ENCODE measurements at regions of chr14 and their contacts with region 1.

Region 1: GRCh38 chr14:93115069-93115820 is 480 bp downstream of the ITPK1 start:
- DNase-seq: peak; percentile 93
- H3K4me3 ChIP-seq: peak overlapping the region; percentile 54 to 88 (median 77)
- H3K27ac ChIP-seq: peak overlapping the region; percentile 98 to 100 (median 100)
- H3K4me1 ChIP-seq: peaks cover 0 to 51% (median 38%) of the 10 kb centered on the region in 4 donors
- H3K27me3 ChIP-seq: no peaks in the 10 kb centered on the region
- CTCF ChIP-seq: peak in 1 of 4 experiments; percentile 19
- EP300 ChIP-seq: no peak
- POLR2A ChIP-seq: peak; percentile 49 to 50

Region 2: DNA sequence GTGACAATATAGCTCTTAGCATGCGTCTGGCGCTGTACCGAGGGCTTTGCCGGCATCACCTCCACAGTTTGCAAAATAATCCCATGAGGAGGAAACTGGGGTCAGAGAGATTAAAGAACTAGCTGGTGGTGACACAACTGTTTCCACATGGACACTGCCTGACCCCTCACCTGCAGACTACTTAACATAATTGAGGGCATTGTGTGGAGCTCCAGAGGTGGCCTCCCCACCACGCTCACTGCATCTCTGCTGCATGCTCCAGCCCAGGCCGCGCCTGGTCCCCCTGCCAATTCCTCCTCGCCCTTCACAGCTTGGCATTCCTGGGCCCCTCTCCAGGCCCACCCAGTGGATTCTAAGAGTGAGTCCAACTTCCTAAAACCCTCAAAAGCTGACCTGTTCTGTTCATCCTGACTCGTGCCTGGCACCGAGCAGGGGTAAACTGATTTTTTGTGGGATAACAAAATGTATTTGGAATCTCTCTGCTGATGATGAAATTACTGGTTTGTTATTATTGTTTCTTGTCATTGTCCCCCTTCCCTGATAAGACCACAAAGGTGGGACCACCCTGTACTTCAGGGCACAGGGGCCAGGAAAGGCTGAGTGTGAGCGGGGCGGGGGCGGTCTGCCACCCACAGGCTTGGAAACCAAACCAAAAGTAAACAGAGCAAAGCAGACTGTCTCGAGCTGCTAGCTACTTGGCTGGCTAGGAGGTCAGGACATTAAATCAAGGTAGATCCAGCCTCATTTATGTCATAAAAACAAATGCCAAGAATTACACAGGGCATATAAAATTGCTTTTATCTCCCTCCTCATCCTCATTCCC is 151.7 kb before region 1 on chr14:
- intact Hi-C with region 1: loop called (anchors 2 kb)
- DNase-seq: no peak
- H3K4me3 ChIP-seq: no peak overlapping the region
- H3K27ac ChIP-seq: peak overlapping the region; percentile 76 to 89 (median 81)
- H3K4me1 ChIP-seq: peaks cover 0 to 50% (median 37%) of the 10 kb centered on the region in 4 donors
- H3K27me3 ChIP-seq: no peaks in the 10 kb centered on the region
- CTCF ChIP-seq: no peak
- EP300 ChIP-seq: peak in 3 of 4 donors; percentile 4 to 51 (median 37)
- POLR2A ChIP-seq: no peak

Region 3: DNA sequence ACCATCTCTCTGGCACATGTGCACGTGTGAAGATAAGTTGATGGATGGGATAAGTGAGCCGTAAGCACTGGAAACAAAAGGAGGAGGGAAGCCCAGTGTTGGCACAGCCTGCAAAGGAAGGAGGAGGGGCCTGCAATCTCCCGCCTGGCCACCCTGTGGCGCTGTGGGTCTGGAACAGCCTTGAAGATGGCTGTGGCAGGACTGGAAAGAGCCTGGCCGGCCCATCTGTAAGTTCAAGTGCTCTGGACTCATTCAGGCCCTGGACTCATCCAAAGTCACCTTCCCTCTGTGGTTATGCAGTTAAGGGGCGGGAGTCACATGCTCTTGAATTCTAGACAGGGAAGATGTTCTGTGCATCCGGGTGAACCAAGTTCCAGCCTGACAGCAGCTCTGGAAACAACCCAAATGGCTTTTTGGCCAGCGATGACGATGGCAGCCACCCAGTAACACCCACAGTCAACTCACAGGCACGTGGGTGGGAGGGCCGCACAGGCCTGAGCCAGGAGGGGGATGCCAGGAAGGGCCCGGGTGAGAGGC is 141.9 kb before region 1 on chr14:
- intact Hi-C with region 1: loop called (anchors 2 kb)
- DNase-seq: peak; percentile 94
- H3K4me3 ChIP-seq: no peak overlapping the region
- H3K27ac ChIP-seq: peak overlapping the region; percentile 77 to 90 (median 85)
- H3K4me1 ChIP-seq: peaks cover 0 to 38% (median 28%) of the 10 kb centered on the region in 4 donors
- H3K27me3 ChIP-seq: no peaks in the 10 kb centered on the region
- CTCF ChIP-seq: peak; percentile 87 to 98 (median 95)
- EP300 ChIP-seq: peak in 3 of 4 donors; percentile 10 to 62 (median 39)
- POLR2A ChIP-seq: no peak

Region 4: DNA sequence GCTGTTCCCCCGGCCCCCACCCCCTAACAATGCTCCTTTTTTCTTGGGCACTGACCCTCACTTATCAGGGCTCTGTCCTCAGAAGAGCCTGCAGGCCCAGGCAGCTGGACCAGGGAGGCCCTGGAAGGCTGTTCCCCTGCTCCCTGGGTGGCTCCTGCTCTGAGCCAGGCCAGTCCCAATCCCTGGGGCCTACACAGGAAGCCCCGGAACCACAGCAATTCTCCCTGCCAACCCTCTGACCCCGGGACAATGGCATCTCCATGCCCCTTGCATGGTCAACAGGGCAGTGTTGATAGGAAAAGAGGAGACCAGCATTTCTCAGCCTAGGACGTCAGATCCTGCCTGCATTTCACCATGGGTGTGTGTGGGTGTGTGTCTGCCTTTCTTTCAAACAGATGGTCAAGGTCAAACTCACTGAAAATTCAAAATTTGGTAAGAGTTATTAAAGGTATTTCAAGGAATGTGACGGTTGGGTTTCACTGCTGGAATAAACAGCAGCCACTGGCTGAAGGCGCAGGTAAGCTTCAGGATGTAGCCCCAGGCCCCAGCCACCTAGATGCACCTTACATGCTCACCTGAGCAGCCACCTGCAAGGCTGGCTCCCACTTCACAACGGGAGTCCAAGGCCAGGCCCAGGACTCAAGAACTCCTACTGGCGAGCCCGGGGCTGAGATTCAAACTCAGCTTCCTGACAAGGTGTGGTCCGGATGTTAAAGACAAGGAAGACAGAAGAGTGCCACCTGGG is 78.1 kb before region 1 on chr14:
- intact Hi-C with region 1: loop called (anchors 1 kb)
- DNase-seq: peak; percentile 82
- H3K4me3 ChIP-seq: no peak overlapping the region
- H3K27ac ChIP-seq: peak overlapping the region; percentile 74 to 94 (median 78)
- H3K4me1 ChIP-seq: peaks cover 0 to 93% (median 82%) of the 10 kb centered on the region in 4 donors
- H3K27me3 ChIP-seq: no peaks in the 10 kb centered on the region
- CTCF ChIP-seq: no peak
- EP300 ChIP-seq: no peak
- POLR2A ChIP-seq: no peak

Region 5: GRCh38 chr14:93059917-93060545 is 55.2 kb before region 1 on chr14:
- intact Hi-C with region 1: loop called (anchors 5 kb)
- DNase-seq: no peak
- H3K4me3 ChIP-seq: no peak overlapping the region
- H3K27ac ChIP-seq: peak overlapping the region; percentile 53 to 90 (median 86)
- H3K4me1 ChIP-seq: peaks cover 0 to 87% (median 86%) of the 10 kb centered on the region in 4 donors
- H3K27me3 ChIP-seq: no peaks in the 10 kb centered on the region
- CTCF ChIP-seq: no peak
- EP300 ChIP-seq: no peak
- POLR2A ChIP-seq: no peak

Region 6: DNA sequence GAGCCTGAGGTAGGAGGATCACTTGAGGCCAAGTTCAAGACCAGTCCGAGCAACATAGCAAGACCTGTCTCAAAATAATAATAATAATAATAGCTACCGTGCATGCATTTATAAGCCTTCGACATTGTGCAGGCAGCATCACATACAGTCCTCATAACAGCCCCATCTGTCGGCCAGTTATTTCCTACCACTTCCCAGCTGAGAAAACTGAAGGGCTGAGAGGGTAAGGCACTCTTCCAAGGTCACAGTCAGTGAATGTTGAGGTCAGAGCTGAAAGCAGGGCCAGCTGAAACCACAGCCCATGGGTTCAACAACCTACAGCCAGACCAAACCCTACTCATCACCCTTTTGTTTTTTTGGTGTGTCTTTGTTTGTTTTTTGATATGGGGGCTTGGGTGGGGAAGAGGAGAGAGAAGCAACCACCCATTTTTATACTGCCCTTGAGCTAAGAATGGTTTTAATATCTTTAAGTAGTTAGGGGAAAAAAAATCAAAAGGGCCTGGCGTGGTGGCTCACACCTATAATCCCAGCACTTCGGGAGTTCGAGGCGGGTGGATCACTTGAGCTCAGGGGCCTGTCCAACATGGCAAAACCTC is 17.3 kb after region 1 on chr14:
- intact Hi-C with region 1: loop called (anchors 2 kb)
- DNase-seq: no peak
- H3K4me3 ChIP-seq: no peak overlapping the region
- H3K27ac ChIP-seq: peak overlapping the region in 3 of 4 donors; percentile 59 to 66 (median 64)
- H3K4me1 ChIP-seq: no peaks in the 10 kb centered on the region
- H3K27me3 ChIP-seq: no peaks in the 10 kb centered on the region
- CTCF ChIP-seq: peak in 2 of 4 experiments; percentile 24 to 34
- EP300 ChIP-seq: no peak
- POLR2A ChIP-seq: no peak

Measured in sigmoid colon (tissue), 7 donors.